GM23248 (cell line): ENCODE measurements at regions of chr10 and their contacts with region 1.

Region 1: GRCh38 chr10:15879058-15879457 is 18.8 kb upstream of the MINDY3 start:
- DNase-seq: peak; percentile 57
- H3K4me3 ChIP-seq: no peak overlapping the region
- H3K27ac ChIP-seq: no peak overlapping the region
- H3K4me1 ChIP-seq: no peaks in the 10 kb centered on the region
- H3K27me3 ChIP-seq: peaks cover 41% of the 10 kb centered on the region

Region 2: DNA sequence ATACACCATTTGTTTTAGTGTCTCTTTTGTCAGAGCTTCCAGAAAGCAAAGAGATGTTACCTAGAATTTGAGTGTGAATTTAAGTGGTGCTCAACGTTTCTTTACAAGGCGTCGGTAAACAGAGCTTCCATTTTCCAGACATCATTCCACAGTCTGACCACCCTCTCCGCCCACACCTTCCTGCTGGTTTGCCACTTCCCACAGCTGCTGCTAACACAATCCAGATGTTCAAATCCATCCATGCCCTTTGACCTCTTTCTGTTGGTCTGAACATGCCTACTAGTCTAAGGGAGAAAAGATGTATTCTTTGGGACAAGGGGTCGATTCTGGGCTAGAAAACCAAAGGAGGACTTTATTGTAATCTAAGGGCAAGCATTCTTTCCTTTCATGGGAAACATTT is 1190.5 kb before region 1 on chr10:
- in situ Hi-C with region 1: no loop called
- DNase-seq: peak; percentile 68
- H3K4me3 ChIP-seq: no peak overlapping the region
- H3K27ac ChIP-seq: no peak overlapping the region
- H3K4me1 ChIP-seq: peaks cover 12% of the 10 kb centered on the region
- H3K27me3 ChIP-seq: no peaks in the 10 kb centered on the region

Region 3: GRCh38 chr10:15931375-15931774 is 52.3 kb after region 1 on chr10:
- in situ Hi-C with region 1: no loop called
- DNase-seq: no peak
- H3K4me3 ChIP-seq: no peak overlapping the region
- H3K27ac ChIP-seq: no peak overlapping the region
- H3K4me1 ChIP-seq: no peaks in the 10 kb centered on the region
- H3K27me3 ChIP-seq: no peaks in the 10 kb centered on the region

Region 4: DNA sequence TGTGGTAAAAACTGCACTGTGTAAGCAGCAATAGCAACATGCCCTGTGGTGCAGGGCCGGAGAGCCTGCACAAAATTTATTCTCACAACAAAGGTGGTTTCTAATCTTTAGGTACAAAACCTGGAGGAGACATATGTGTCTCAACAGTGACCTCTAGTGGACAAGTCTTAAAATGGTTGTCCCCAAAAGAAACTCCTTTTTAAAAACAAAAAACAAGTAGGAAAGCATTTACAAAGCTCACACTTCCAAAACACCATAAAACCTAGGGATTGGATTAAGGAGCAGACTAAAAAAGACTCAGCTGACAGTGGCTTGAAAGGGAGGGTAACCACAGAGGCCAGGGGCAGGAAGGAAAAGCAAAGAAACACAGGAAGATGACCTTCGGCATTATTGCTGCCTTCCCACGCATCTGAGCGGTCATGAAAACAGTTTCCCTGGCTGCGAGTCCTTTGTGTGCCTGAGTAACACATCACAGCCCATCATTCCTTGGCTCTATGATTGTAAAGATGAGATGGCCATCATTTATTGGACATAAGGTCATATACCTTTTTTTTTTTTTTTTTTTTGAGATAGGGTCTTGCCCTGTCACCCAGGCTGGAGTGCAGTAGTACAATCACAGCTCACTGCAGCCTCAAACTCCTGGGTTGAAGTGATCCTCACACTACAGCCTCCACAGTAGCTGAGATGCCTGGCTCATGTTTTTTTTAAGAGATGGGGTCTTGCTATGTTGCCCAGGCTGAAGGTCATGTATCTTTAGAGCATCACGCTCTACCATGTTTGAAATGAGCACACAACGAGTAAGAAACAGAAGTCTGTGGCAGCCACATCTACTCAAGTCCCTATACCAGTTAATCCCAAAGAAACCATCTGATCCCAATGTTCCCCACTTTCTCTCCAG is 898.7 kb after region 1 on chr10:
- in situ Hi-C with region 1: loop called (anchors 25 kb)
- DNase-seq: peak; percentile 69
- H3K4me3 ChIP-seq: no peak overlapping the region
- H3K27ac ChIP-seq: no peak overlapping the region
- H3K4me1 ChIP-seq: peaks cover 9% of the 10 kb centered on the region; the same call in 1 of the 2 replicates
- H3K27me3 ChIP-seq: no peaks in the 10 kb centered on the region

Region 5: DNA sequence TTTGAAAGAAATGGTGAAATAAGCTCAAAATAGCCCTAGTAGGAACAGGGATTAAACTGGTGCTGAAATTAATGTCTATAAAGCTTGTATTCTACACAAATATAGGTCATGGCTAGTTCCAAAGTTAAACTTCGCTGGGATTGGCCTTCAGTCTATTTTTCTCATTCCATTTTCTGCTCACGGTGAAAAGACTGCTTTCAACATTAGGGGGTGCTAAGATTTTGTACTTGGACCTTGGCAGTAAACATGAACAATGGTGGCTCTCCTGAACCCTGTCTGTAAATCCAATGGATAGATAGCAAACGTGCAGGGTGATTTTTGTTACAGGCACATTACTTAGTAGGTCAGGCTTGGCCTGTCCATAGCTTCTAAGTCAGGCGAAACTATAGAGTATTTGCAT is 974.1 kb after region 1 on chr10:
- in situ Hi-C with region 1: no loop called
- DNase-seq: peak; percentile 47
- H3K4me3 ChIP-seq: no peak overlapping the region
- H3K27ac ChIP-seq: no peak overlapping the region
- H3K4me1 ChIP-seq: peaks cover 18% of the 10 kb centered on the region
- H3K27me3 ChIP-seq: no peaks in the 10 kb centered on the region

Region 6: GRCh38 chr10:17257466-17258321 is 1378.6 kb after region 1 on chr10:
- in situ Hi-C with region 1: loop called (anchors 25 kb)
- DNase-seq: peak; percentile 87
- H3K4me3 ChIP-seq: peak overlapping the region; percentile 64
- H3K27ac ChIP-seq: peak overlapping the region; percentile 41
- H3K4me1 ChIP-seq: peaks cover 21% of the 10 kb centered on the region
- H3K27me3 ChIP-seq: no peaks in the 10 kb centered on the region